Breast epithelium (tissue), 4 donors: ENCODE measurements at regions of chr10 and their contacts with region 1.

Region 1: DNA sequence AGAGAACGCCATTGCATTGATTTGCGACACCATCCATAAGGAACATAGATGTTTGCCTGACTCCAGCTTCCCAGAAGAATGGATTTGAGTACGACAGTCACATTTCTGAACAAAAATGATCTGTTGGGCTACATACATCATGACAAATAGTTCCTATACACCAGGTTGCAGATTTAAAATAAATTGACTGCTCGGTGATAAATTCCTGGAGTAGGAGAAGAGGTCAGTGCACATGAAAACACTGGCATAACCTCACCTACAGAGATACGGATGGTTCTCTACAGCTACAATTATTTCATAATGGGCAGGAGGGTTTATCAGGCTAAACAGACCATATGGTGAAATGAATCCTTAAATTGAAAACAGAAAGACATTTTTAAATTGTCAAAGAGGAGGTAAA is 316.5 kb upstream of the ADARB2 start:
- DNase-seq: no peak
- H3K4me3 ChIP-seq: no peak overlapping the region
- H3K27ac ChIP-seq: no peak overlapping the region
- H3K4me1 ChIP-seq: no peaks in the 10 kb centered on the region
- H3K27me3 ChIP-seq: no peaks in the 10 kb centered on the region
- CTCF ChIP-seq: no peak
- POLR2A ChIP-seq: no peak

Region 2: DNA sequence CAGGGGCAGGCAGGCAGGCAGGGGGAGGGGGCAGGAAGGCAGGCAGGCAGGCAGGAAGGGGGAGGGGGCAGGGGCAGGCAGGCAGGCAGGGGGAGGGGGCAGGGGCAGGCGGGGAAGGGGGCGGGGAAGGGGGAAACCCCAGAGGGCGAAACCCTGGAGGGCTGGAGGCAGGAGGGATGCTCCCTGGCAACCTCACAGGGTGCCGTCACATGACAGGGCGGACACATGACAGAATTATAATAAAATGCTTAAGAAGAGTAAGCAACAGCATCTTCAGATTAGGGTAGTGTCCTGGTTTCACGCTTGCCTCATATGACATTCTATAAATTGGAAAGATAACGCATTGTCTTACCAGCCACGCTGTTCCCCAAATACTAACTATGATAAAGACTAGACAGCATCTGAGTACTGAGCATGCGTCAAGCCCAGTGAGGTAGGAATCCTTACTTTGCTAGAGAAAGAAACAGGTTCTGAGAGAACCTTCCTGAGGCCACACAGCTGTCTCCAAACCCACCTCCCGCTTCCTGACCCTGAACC is 1495.9 kb before region 1 on chr10:
- intact Hi-C with region 1: no loop called
- DNase-seq: no peak
- H3K4me3 ChIP-seq: no peak overlapping the region
- H3K27ac ChIP-seq: no peak overlapping the region
- H3K4me1 ChIP-seq: no peaks in the 10 kb centered on the region
- H3K27me3 ChIP-seq: no peaks in the 10 kb centered on the region
- CTCF ChIP-seq: no peak
- POLR2A ChIP-seq: no peak

Region 3: GRCh38 chr10:2067015-2067414 is 13.2 kb after region 1 on chr10:
- intact Hi-C with region 1: loop called (anchors 1 kb)
- DNase-seq: no peak
- H3K4me3 ChIP-seq: no peak overlapping the region
- H3K27ac ChIP-seq: no peak overlapping the region
- H3K4me1 ChIP-seq: no peaks in the 10 kb centered on the region
- H3K27me3 ChIP-seq: no peaks in the 10 kb centered on the region
- CTCF ChIP-seq: no peak
- POLR2A ChIP-seq: no peak